MCF 10A (cell line): ENCODE measurements at regions of chr10 and their contacts with region 1.

Region 1: DNA sequence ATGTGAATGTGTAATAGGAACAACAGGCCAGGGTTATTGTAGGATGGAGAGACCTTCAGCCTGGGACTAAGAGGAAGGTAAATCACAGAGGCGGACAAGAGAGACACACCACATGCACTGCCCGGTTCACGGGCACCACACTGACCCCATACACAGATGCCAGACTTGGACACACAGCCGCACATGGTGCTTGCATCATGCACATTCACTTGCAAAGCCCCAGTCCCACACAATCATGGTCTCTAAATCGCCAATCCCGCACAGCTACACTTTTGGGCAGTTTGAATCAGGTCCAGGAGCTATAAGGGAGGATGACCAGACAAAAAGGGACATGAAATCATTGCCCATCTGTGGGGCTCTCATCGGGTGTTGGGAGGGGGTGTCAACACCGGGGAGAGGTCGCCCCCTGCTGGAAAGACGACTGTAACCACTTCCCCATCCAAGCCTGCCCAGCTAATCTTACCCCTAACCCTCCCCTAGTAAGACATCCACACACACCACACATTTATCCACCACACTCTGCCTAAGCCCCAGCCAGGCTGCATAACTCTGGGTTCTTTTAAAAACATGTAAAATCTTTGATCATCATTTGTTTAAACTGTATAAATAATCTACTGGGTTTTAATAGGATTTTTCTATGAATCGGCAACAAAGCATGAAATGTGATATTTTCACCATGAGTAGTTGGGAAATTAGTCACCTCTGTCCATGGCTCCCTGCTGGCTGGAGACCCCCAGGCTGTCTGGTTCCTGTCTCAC is 40.5 kb upstream of the SLF2 start:
- DNase-seq: peak; percentile 65
- H3K4me3 Mint-ChIP-seq: no peak overlapping the region
- H3K27ac Mint-ChIP-seq: no peak overlapping the region
- H3K4me1 Mint-ChIP-seq: no peaks in the 10 kb centered on the region
- H3K27me3 Mint-ChIP-seq: peaks cover 5% of the 10 kb centered on the region
- CTCF ChIP-seq: peak; percentile 65

Region 2: DNA sequence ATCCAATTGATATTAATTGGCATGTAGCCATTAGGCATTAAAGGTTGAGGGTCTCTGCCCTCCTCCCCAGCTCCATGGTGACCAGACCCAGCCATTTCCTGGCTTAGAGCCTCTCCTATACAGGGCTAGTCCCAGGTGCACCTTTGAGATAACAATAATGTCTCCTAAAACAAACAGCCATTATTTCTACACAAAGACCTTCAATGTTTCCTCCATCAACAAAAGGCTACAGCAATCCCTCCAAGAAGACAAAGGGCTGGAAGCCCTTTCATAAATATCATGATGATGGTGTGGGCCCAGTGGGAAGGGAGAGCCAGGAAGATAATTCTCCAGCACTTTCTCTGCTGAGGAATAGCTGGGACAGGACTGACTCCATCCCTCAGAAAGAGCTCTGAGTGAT is 552.5 kb before region 1 on chr10:
- CTCF ChIA-PET with region 1: no interaction called
- POLR2A ChIA-PET with region 1: no interaction called
- intact Hi-C with region 1: no loop called
- DNase-seq: no peak
- H3K4me3 Mint-ChIP-seq: no peak overlapping the region
- H3K27ac Mint-ChIP-seq: no peak overlapping the region
- H3K4me1 Mint-ChIP-seq: no peaks in the 10 kb centered on the region
- H3K27me3 Mint-ChIP-seq: peaks cover 6% of the 10 kb centered on the region
- CTCF ChIP-seq: no peak

Region 3: DNA sequence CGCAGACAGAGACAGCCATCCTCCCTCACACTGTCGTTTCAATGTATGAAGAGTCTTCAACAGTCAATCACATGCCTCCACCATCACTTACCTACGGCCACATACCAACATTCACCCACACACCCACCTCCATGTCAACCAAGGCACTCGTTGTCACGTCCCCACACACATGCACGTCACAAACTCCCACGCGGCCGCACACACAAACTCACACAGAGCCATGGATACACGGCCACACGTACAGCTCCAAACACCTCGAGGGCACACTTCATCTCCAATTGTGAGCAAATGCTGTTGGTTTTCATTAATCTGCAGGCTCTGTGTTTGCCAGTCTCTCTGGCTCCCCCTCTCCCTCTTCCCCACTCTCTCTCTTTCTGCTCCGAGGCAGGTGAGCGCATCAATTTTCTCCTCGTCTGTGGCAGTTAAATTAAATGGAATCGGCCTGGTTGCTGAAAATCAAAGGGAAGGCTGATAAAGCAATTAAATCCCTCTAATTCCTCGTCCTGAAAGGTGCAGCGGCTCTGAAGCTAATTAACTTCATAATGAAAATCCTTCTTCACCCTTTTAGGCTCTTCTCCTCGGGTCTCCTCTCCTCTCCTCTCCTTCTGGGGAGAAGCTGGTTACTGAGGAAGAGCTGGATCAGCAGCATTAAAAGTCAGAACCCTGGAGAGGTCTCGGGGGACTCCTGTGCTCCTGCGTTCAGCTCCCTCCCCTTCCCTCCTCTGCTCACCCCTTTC is 13.3 kb before region 1 on chr10:
- CTCF ChIA-PET with region 1: interaction called, 10 read pairs
- POLR2A ChIA-PET with region 1: no interaction called
- intact Hi-C with region 1: no loop called
- DNase-seq: no peak
- H3K4me3 Mint-ChIP-seq: no peak overlapping the region
- H3K27ac Mint-ChIP-seq: no peak overlapping the region
- H3K4me1 Mint-ChIP-seq: no peaks in the 10 kb centered on the region
- H3K27me3 Mint-ChIP-seq: peaks cover 90% of the 10 kb centered on the region
- CTCF ChIP-seq: no peak